ENCODE measurements at regions of chr7 and their contacts with region 1.

Region 1: DNA sequence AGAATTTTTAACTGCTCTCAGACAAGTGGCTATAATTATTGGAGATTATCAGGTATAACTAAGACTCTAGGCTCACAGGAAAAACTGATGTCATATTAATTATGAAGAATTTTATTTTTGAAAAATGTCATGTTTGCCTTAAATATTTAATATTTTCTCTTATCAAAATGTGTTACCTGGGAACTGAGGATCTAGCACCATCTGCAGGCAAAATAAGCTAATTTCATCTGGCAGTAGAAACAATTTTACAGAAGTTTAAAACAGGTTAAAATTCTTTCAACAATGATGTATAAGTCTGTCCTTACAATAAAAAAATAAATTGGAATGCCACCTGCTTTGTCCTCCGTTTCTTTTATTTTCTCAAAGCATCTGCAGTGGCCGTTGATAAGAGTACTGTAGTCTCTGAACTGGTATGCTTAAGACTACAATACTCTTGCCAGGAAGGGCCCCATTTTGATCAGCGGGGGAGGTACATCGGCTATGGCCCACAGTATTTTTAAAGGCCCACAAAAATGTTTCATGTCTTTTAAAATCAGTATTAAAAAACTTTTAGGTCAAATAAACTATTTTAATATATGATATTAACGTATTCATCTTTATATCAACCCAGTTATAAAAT is 81.3 kb downstream of the VWDE start:
- DNase-seq: no peak
- H3K4me3 ChIP-seq: no peak overlapping the region
- H3K27ac ChIP-seq: no peak overlapping the region
- H3K4me1 ChIP-seq: no peaks in the 10 kb centered on the region
- H3K27me3 ChIP-seq: no peaks in the 10 kb centered on the region
- CTCF ChIP-seq: peak in 3 of 4 experiments; percentile 61 to 75 (median 72)
- POLR2A ChIP-seq: no peak

Region 2: DNA sequence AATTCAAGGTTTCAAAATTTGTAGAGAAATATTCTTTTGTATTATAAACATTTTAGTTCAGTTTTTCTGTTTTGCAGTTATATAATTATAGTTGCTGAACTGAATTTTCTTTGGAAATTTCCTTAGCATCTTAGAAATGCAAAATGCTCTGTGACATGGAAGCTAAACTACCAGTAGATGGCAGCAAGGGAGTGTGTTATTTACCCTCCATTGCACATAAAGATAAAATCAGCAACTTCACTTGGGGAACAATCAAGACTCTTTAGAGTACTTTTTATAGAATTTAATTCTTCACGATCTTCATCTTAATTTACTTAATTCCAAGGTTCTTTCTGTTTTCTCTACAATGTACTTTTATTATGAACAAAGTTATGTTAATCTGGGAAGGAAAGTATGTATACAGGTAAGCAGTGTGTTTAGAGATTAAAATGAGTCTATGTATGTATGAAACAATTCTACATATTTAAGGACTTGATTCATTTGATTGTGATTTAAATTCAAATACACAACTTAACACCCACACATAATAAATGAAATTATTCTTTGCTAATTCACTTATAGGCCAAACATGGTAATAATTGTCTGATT is 894.6 kb before region 1 on chr7:
- intact Hi-C with region 1: loop called (anchors 2 kb)
- DNase-seq: peak; percentile 24
- H3K4me3 ChIP-seq: no peak overlapping the region
- H3K27ac ChIP-seq: no peak overlapping the region
- H3K4me1 ChIP-seq: no peaks in the 10 kb centered on the region
- H3K27me3 ChIP-seq: no peaks in the 10 kb centered on the region
- CTCF ChIP-seq: peak in 3 of 4 experiments; percentile 59 to 82 (median 77)
- POLR2A ChIP-seq: no peak

Region 3: GRCh38 chr7:12056381-12056780 is 266.0 kb before region 1 on chr7:
- intact Hi-C with region 1: no loop called
- DNase-seq: no peak
- H3K4me3 ChIP-seq: no peak overlapping the region
- H3K27ac ChIP-seq: no peak overlapping the region
- H3K4me1 ChIP-seq: no peaks in the 10 kb centered on the region
- H3K27me3 ChIP-seq: no peaks in the 10 kb centered on the region
- CTCF ChIP-seq: no peak
- POLR2A ChIP-seq: no peak

Region 4: DNA sequence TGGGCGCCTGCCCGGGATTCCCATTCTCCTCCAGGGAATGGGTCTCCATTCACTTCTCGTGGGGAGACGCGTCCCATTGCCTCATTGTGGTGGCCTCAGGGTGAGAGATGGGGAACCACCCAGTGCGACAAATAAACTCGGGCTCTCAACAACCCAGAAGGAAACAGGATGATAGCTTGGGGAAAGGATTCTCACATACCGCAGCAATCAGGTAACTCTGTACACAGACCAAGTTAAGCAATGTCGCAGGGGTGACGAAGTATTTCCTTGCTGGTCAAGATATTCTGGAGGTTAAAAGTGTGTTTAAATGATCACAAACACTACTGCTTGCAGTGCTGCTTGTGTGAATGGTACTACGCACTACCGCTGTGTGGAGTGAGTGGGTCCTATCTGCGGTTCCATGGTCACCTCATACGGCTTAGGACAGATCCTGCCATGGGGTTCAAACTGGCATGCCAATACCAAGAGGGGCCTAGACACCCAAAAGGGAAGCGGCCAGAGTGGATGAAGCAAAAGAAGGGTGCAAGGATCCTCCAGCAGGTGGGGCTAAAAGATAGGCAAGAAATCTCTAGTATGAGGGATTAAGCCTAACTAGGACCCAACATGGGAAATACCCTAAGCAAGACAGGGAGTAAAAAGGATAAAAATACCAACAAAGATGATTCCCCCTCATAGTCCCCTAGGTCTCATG is 255.1 kb before region 1 on chr7:
- intact Hi-C with region 1: loop called (anchors 2 kb)
- DNase-seq: peak; percentile 60
- H3K4me3 ChIP-seq: no peak overlapping the region
- H3K27ac ChIP-seq: no peak overlapping the region
- H3K4me1 ChIP-seq: no peaks in the 10 kb centered on the region
- H3K27me3 ChIP-seq: no peaks in the 10 kb centered on the region
- CTCF ChIP-seq: peak; percentile 22 to 80 (median 67)
- POLR2A ChIP-seq: no peak

Region 5: DNA sequence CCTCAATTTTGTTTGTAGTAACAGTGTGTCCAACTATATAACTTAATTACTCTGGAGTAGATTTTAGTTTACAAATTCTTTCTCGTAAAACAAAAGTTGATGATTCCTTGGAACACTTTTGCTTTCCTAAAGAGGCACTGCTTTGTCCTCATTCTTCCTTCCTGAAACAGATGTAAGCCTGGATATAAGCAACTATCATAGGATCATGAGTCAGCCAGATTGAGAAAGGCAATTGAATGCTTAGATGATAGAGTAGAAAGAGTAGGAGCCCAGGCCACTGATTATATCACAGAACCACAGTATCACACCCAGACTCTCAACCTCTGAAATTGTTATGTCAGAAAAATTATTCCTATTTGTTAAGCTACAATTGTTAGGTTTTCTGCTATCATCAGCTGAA is 41.4 kb before region 1 on chr7:
- intact Hi-C with region 1: no loop called
- DNase-seq: no peak
- H3K4me3 ChIP-seq: no peak overlapping the region
- H3K27ac ChIP-seq: no peak overlapping the region
- H3K4me1 ChIP-seq: no peaks in the 10 kb centered on the region
- H3K27me3 ChIP-seq: no peaks in the 10 kb centered on the region
- CTCF ChIP-seq: no peak
- POLR2A ChIP-seq: no peak